Activated CD8-positive, alpha-beta T cell treated with anti-CD3 and anti-CD28 coated beads, Interleukin-2, amount 10 ng/mL, durations not matched to agents 7 days and 5 days (primary cell): ENCODE measurements at regions of chr1 and their contacts with region 1.

Region 1: DNA sequence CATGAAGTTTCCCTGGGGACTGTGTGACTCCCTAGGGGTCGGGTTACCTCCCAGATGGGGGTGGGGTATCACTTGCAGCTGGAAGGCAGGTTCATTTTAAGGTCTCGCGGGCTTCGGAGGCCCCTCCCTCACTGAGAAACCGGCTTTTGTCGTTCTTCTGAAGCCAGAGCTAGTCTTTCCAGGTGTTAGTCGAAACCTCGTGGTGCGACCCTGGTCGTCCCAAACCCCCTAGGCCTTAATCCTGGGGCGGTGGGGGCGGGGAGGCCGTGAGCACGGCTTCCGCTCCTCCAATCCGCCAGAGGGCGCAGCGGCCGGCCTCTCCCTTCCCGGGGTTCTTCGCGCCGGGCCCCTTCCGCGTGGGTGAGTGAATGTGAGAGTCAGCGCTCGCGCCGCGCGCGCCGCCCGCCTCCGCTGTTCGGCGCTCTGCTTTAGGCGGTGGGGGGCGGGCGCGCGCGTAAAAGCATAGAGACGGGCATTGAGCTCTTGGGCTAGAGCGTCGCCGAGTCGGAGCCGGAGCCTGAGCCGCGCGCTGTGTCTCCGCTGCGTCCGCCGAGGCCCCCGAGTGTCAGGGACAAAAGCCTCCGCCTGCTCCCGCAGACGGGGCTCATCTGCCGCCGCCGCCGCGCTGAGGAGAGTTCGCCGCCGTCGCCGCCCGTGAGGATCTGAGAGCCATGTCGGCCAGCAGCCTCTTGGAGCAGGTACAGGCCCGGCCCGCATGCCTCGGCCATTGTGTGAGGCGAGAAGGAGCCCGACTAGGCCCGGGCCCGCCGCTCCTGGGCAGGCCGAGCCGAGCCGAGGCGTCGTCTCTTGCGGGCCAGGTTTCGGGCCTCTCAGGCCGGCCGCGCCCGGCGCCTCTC is at the start of gene YTHDF2:
- DNase-seq: peak; percentile 98
- ATAC-seq: peak; percentile 97
- H3K4me3 Mint-ChIP-seq: peak within 1 kb of the TSS; percentile 97
- H3K27ac Mint-ChIP-seq: peak within 1 kb of the TSS; percentile 94
- H3K4me1 Mint-ChIP-seq: peaks cover 38% of the 10 kb centered on the region
- H3K27me3 Mint-ChIP-seq: no peaks in the 10 kb centered on the region
- total RNA-seq, gene YTHDF2: 67.3 to 80.6 TPM

Region 2: GRCh38 chr1:28341591-28341990 is 395.1 kb before region 1 on chr1:
- CTCF ChIA-PET with region 1: no interaction called
- POLR2A ChIA-PET with region 1: no interaction called
- DNase-seq: no peak
- ATAC-seq: no peak
- H3K4me3 Mint-ChIP-seq: no peak overlapping the region
- H3K27ac Mint-ChIP-seq: no peak overlapping the region
- H3K4me1 Mint-ChIP-seq: peaks cover 20% of the 10 kb centered on the region
- H3K27me3 Mint-ChIP-seq: no peaks in the 10 kb centered on the region

Region 3: GRCh38 chr1:28648474-28649198 is 88.0 kb before region 1 on chr1 and contains the start of gene RNU11:
- CTCF ChIA-PET with region 1: interaction called, 36 read pairs
- POLR2A ChIA-PET with region 1: interaction called, 59 read pairs
- DNase-seq: peak; percentile 93
- ATAC-seq: peak; percentile 80
- H3K4me3 Mint-ChIP-seq: peak within 1 kb of the TSS; percentile 84
- H3K27ac Mint-ChIP-seq: peak within 1 kb of the TSS; percentile 99
- H3K4me1 Mint-ChIP-seq: peaks cover 32% of the 10 kb centered on the region
- H3K27me3 Mint-ChIP-seq: no peaks in the 10 kb centered on the region
- total RNA-seq, gene RNU11: not detected

Region 4: DNA sequence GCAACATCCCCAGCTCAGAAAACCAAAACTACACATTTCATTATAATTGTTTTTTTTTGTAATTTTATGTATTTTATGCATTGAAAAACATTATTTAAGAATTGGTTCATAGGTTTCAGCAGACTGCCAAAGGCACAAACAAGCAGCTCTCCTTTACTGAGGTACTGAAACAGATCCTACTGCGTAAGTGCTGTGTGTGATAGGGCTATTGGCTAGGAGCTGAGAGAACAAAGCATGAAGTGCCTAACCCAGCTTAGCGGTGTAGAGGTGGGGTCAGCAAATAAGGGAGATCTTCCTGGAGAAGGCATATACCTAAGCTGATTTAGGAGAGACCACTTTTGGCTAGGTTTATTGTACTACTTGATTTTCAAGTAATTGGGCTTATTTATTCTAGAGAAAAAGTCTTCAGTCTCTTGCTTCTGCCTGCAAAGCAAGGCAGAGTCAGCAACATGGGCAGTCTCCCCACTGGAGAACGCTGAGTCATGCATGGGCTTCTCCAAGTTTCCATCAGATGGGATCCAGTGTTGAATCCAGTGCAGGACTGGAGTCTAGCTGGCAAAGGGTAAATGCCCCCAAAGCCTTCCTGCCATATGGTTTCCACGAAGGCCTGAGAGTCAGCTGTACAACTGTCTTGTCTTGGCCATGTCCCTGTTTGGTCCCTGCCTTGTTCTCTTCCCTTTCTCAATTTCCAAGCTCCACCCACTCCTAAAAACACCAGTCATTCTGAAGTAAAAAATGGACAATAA is 17.9 kb before region 1 on chr1:
- CTCF ChIA-PET with region 1: interaction called, 13 read pairs
- POLR2A ChIA-PET with region 1: no interaction called
- DNase-seq: no peak
- ATAC-seq: no peak
- H3K4me3 Mint-ChIP-seq: no peak overlapping the region
- H3K27ac Mint-ChIP-seq: no peak overlapping the region
- H3K4me1 Mint-ChIP-seq: no peaks in the 10 kb centered on the region
- H3K27me3 Mint-ChIP-seq: no peaks in the 10 kb centered on the region

Region 5: DNA sequence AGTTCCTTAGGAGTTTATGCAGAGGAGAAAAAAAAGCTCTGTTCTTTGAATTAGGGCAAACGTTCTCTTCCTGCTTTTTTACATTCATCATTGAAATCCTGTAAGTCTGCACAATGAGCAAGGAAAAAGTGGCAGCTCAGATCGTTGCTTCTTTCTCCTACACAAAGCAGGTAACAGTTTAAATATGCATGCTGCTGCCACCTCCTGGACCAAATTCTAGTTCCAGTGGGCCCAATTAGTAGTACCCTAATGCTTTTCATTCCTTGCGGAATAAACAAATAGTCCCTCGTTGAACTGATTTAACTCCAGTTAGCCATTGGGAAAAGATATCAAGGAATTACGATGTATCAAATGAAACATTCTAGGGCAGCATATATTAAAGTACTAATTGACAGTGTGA is 20.2 kb after region 1 on chr1:
- CTCF ChIA-PET with region 1: interaction called, 18 read pairs
- POLR2A ChIA-PET with region 1: interaction called, 11 read pairs
- DNase-seq: no peak
- ATAC-seq: no peak
- H3K4me3 Mint-ChIP-seq: no peak overlapping the region
- H3K27ac Mint-ChIP-seq: no peak overlapping the region
- H3K4me1 Mint-ChIP-seq: peaks cover 13% of the 10 kb centered on the region
- H3K27me3 Mint-ChIP-seq: no peaks in the 10 kb centered on the region

Region 6: DNA sequence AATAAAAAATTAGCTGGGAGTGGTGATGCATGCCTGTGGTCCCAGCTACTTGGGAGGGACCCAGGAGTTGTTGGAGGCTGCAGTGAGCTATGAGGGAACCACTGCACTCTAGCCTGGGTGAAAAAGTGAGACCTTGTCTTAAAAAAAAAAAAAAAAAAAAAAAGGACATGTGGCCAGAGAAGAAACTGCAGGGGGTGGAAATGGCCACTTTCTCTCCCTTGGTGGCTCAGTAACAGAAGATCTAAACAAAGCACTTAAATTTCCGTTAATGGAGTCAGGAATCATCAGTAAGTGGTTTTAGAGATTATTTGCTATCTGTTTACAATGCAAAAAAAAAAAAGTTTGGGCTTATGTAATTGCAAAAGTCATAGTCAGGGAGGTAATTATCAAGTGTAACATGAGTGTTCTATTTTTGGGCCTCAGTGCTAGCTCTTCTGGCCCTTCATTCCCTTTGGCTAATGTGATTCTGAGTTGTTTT is 56.0 kb after region 1 on chr1:
- CTCF ChIA-PET with region 1: no interaction called
- POLR2A ChIA-PET with region 1: no interaction called
- DNase-seq: no peak
- ATAC-seq: no peak
- H3K4me3 Mint-ChIP-seq: no peak overlapping the region
- H3K27ac Mint-ChIP-seq: no peak overlapping the region
- H3K4me1 Mint-ChIP-seq: peaks cover 3% of the 10 kb centered on the region
- H3K27me3 Mint-ChIP-seq: peaks cover 12% of the 10 kb centered on the region

Region 7: DNA sequence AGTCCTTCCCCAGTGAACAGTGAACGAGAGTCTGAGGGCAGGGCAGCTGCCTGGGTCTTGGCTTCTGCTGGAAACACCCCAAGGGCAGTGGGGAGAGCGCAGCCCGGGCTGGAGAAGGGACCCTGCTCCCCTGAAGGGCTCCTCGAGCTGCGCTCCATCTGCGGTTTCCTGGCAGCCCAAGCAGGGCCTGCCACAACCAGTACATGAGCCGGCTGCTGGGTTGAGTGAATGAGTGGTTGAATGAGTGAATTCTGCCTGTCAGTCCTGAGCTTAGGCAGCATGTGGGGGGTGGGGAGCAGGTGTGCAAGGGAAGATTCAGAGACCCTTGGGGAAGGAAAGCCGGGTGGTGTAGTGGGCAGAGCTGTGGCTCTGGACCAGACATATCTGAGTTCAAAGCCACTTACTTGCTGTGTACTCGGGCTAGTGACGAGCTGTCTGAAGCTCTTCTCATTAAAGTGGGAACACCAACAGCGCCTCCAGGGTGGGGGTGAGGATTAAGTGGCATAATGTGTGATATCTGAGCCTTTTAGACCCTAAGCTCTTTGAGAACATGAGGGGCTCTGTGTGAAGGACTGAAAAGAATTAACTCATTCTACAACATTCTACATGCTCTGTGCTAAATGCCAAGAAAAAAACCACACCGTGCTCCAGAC is 79.0 kb after region 1 on chr1:
- CTCF ChIA-PET with region 1: no interaction called
- POLR2A ChIA-PET with region 1: no interaction called
- DNase-seq: peak; percentile 24
- ATAC-seq: peak; percentile 56
- H3K4me3 Mint-ChIP-seq: no peak overlapping the region
- H3K27ac Mint-ChIP-seq: no peak overlapping the region
- H3K4me1 Mint-ChIP-seq: peaks cover 7% of the 10 kb centered on the region
- H3K27me3 Mint-ChIP-seq: peaks cover 43% of the 10 kb centered on the region